ENCODE measurements at regions of chr4 and their contacts with region 1.

Region 1: GRCh38 chr4:52957220-52957686 is 95.1 kb downstream of the RASL11B start:
- DNase-seq: peak; percentile 58
- ATAC-seq: peak; percentile 24; the same call in 1 of the 2 replicates
- H3K4me3 ChIP-seq: no peak overlapping the region
- H3K27ac ChIP-seq: peak overlapping the region; percentile 84; the same call in 1 of the 2 replicates
- H3K4me1 ChIP-seq: peaks cover 38% of the 10 kb centered on the region
- H3K27me3 ChIP-seq: no peaks in the 10 kb centered on the region
- CTCF ChIP-seq: no peak
- POLR2A ChIP-seq: no peak
- RAD21 ChIP-seq: no peak

Region 2: DNA sequence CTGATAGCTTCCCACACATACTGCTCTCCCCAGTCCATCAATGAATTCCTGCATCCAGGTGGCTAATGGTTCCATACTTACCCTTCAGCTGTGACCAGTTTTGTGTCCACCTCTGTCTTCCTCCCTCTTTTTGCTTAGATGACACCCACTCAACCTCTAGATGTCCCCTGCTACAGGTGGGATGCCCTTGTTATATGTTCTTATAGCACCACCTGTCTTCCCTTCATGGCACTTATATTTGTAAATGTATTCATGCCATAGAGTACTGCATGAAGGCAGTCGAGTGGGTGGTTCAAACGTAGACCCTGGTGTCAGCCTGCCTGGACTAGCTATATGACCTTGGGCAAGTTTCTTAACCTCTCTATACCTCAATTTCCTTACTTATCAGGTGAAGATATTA is 291.7 kb before region 1 on chr4:
- CTCF ChIA-PET with region 1: no interaction called
- POLR2A ChIA-PET with region 1: no interaction called
- dilution Hi-C with region 1: no loop called
- in situ Hi-C with region 1: no loop called
- intact Hi-C with region 1: no loop called
- DNase-seq: no peak
- ATAC-seq: no peak
- H3K4me3 ChIP-seq: no peak overlapping the region
- H3K27ac ChIP-seq: no peak overlapping the region
- H3K4me1 ChIP-seq: no peaks in the 10 kb centered on the region
- H3K27me3 ChIP-seq: no peaks in the 10 kb centered on the region; the same call in 1 of the 2 replicates
- CTCF ChIP-seq: peak; percentile 28; the same call in 1 of the 2 replicates
- POLR2A ChIP-seq: no peak
- RAD21 ChIP-seq: peak; percentile 46

Region 3: GRCh38 chr4:52861879-52862616 is 95.2 kb before region 1 on chr4 and contains the start of gene RASL11B:
- CTCF ChIA-PET with region 1: no interaction called
- POLR2A ChIA-PET with region 1: no interaction called
- dilution Hi-C with region 1: no loop called
- in situ Hi-C with region 1: no loop called
- intact Hi-C with region 1: loop called (anchors 5 kb)
- DNase-seq: peak; percentile 52
- ATAC-seq: peak; percentile 98
- H3K4me3 ChIP-seq: peak within 1 kb of the TSS; percentile 89
- H3K27ac ChIP-seq: peak within 1 kb of the TSS; percentile 55; the same call in 1 of the 2 replicates
- H3K4me1 ChIP-seq: peaks cover 9% of the 10 kb centered on the region
- H3K27me3 ChIP-seq: peaks cover 8% of the 10 kb centered on the region
- CTCF ChIP-seq: no peak; the same call in 1 of the 2 replicates
- POLR2A ChIP-seq: no peak; the same call in 1 of the 2 replicates
- RAD21 ChIP-seq: no peak
- total RNA-seq, gene RASL11B: 0.18 and 0.28 TPM in 2 replicates

Region 4: GRCh38 chr4:52894443-52894842 is 62.8 kb before region 1 on chr4:
- CTCF ChIA-PET with region 1: no interaction called
- POLR2A ChIA-PET with region 1: no interaction called
- dilution Hi-C with region 1: no loop called
- in situ Hi-C with region 1: no loop called
- intact Hi-C with region 1: loop called (anchors 5 kb)
- DNase-seq: no peak
- ATAC-seq: no peak
- H3K4me3 ChIP-seq: no peak overlapping the region
- H3K27ac ChIP-seq: peak overlapping the region; percentile 41; the same call in 1 of the 2 replicates
- H3K4me1 ChIP-seq: peaks cover 21% of the 10 kb centered on the region
- H3K27me3 ChIP-seq: no peaks in the 10 kb centered on the region
- CTCF ChIP-seq: no peak
- POLR2A ChIP-seq: no peak
- RAD21 ChIP-seq: no peak

Region 5: GRCh38 chr4:52911684-52912294 is 45.5 kb before region 1 on chr4:
- CTCF ChIA-PET with region 1: interaction called, 3 read pairs
- POLR2A ChIA-PET with region 1: no interaction called
- dilution Hi-C with region 1: no loop called
- in situ Hi-C with region 1: no loop called
- intact Hi-C with region 1: loop called (anchors 5 kb)
- DNase-seq: peak; percentile 56
- ATAC-seq: 0 out of 2 replicates have a peak, but pooled peaks have one; percentile 22
- H3K4me3 ChIP-seq: no peak overlapping the region
- H3K27ac ChIP-seq: no peak overlapping the region
- H3K4me1 ChIP-seq: peaks cover 23% of the 10 kb centered on the region
- H3K27me3 ChIP-seq: no peaks in the 10 kb centered on the region
- CTCF ChIP-seq: peak; percentile 53
- POLR2A ChIP-seq: no peak
- RAD21 ChIP-seq: peak; percentile 37